ENCODE measurements at regions of chr13 and their contacts with region 1.

Region 1: GRCh38 chr13:81872581-81872980 is 1531.7 kb upstream of the SPRY2 start:
- DNase-seq: no peak
- H3K4me3 ChIP-seq: no peak overlapping the region
- H3K27ac ChIP-seq: no peak overlapping the region
- H3K27me3 ChIP-seq: no peaks in the 10 kb centered on the region
- CTCF ChIP-seq: peak in 36 of 56 donors; percentile 10 to 50 (median 26)

Region 2: DNA sequence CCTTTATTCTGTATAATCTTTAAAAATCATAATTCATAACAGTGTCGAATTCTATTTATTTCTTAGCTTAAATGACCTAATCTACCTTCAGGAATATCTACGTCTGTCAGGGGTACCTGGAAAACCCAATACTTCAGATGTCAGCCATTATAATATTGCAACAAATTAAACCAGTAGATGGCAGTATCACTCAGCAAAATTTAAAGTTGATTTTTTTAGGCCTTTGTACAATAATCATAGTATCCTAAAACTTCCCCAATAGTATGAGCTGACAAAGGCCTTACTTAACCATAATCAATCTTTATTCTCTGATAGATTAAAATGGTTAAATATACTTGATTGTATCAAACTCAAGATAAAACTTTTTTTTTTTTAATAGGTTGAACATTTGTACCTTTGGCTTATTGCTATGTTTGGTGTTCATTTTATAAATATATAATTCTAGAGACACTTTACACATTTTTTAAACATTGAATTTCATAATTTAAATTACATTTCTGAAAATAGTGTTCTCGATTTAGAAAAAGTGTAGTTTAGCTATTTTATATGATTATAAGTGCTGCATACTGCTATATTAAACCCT is 701.4 kb before region 1 on chr13:
- intact Hi-C with region 1: loop called in 1 of 2 experiments (anchors 10 kb)
- DNase-seq: no peak
- H3K4me3 ChIP-seq: no peak overlapping the region
- H3K27ac ChIP-seq: no peak overlapping the region
- H3K27me3 ChIP-seq: no peaks in the 10 kb centered on the region
- CTCF ChIP-seq: peak; percentile 45 to 90 (median 72)